ENCODE measurements at regions of chr9 and their contacts with region 1.

Region 1: GRCh38 chr9:22238809-22239684 is 207.6 kb upstream of the DMRTA1 start:
- DNase-seq: peak; percentile 7 to 74
- ATAC-seq: peak; percentile 9 to 60; a peak in 3 of 6 replicates
- H3K4me3 ChIP-seq: peak overlapping the region; percentile 19; the same call in 2 of the 3 replicates
- H3K27ac ChIP-seq: peak overlapping the region; percentile 85 to 90
- H3K4me1 ChIP-seq: peaks cover 54% of the 10 kb centered on the region
- CTCF ChIP-seq: peak; percentile 73
- EP300 ChIP-seq: no peak
- POLR2A ChIP-seq: no peak
- RAD21 ChIP-seq: peak; percentile 44 to 69

Region 2: GRCh38 chr9:22158927-22159346 is 80.1 kb before region 1 on chr9:
- CTCF ChIA-PET with region 1: interaction called, 15 read pairs
- POLR2A ChIA-PET with region 1: no interaction called
- DNase-seq: peak in 1 of 2 experiments; percentile 94
- ATAC-seq: peak; percentile 90 to 97
- H3K4me3 ChIP-seq: peak overlapping the region; percentile 18; the same call in 1 of the 3 replicates
- H3K27ac ChIP-seq: peak overlapping the region; percentile 89 to 90
- H3K4me1 ChIP-seq: peaks cover 57% of the 10 kb centered on the region
- CTCF ChIP-seq: no peak
- EP300 ChIP-seq: peak; percentile 99
- POLR2A ChIP-seq: no peak
- RAD21 ChIP-seq: peak; percentile 17 to 68; a peak in 4 of 5 replicates

Region 3: DNA sequence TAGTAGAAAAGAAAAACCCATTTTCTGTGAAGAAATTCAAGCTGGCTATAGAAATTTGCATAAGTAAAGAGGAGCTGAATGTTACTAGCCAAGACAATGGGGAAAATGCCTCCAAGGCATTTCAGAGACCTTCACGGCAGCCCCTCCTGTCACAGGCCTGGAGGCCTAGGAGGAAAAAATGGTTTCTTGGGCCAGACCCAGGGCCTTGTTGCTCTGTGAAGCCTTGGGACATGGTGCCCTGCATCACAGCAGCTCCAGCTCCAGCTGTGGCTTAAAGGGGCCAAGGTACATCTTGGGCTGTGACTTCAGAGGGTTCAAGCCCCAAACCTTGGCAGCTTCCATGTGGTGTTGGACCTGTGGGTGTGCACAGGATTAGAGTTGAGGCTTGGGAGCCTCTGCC is 77.6 kb after region 1 on chr9:
- CTCF ChIA-PET with region 1: no interaction called
- POLR2A ChIA-PET with region 1: no interaction called
- DNase-seq: no peak
- ATAC-seq: no peak
- H3K4me3 ChIP-seq: no peak overlapping the region
- H3K27ac ChIP-seq: no peak overlapping the region
- H3K4me1 ChIP-seq: no peaks in the 10 kb centered on the region
- CTCF ChIP-seq: no peak
- EP300 ChIP-seq: no peak
- POLR2A ChIP-seq: no peak
- RAD21 ChIP-seq: no peak